ENCODE measurements at regions of chr5 and their contacts with region 1.

Region 1: GRCh38 chr5:14077501-14077900 is 65.6 kb upstream of the TRIO start:
- DNase-seq: no peak
- H3K4me3 ChIP-seq: no peak overlapping the region
- H3K27ac ChIP-seq: no peak overlapping the region
- H3K4me1 ChIP-seq: no peaks in the 10 kb centered on the region
- H3K27me3 ChIP-seq: no peaks in the 10 kb centered on the region
- CTCF ChIP-seq: no peak

Region 2: GRCh38 chr5:13994621-13995253 is 82.8 kb before region 1 on chr5:
- CTCF ChIA-PET with region 1: no interaction called
- dilution Hi-C with region 1: no loop called
- in situ Hi-C with region 1: no loop called
- intact Hi-C with region 1: no loop called
- DNase-seq: no peak
- H3K4me3 ChIP-seq: no peak overlapping the region
- H3K27ac ChIP-seq: no peak overlapping the region
- H3K4me1 ChIP-seq: peaks cover 9% of the 10 kb centered on the region
- H3K27me3 ChIP-seq: no peaks in the 10 kb centered on the region
- CTCF ChIP-seq: no peak

Region 3: GRCh38 chr5:14019768-14020290 is 57.7 kb before region 1 on chr5:
- CTCF ChIA-PET with region 1: no interaction called
- dilution Hi-C with region 1: loop called (anchors 5 kb)
- in situ Hi-C with region 1: no loop called
- intact Hi-C with region 1: no loop called
- DNase-seq: no peak
- H3K4me3 ChIP-seq: no peak overlapping the region
- H3K27ac ChIP-seq: no peak overlapping the region
- H3K4me1 ChIP-seq: no peaks in the 10 kb centered on the region
- H3K27me3 ChIP-seq: no peaks in the 10 kb centered on the region
- CTCF ChIP-seq: no peak

Measured in mammary epithelial cell (primary cell).